Left ventricle myocardium superior (tissue), 1 donor: ENCODE measurements at regions of chr3 and their contacts with region 1.

Region 1: DNA sequence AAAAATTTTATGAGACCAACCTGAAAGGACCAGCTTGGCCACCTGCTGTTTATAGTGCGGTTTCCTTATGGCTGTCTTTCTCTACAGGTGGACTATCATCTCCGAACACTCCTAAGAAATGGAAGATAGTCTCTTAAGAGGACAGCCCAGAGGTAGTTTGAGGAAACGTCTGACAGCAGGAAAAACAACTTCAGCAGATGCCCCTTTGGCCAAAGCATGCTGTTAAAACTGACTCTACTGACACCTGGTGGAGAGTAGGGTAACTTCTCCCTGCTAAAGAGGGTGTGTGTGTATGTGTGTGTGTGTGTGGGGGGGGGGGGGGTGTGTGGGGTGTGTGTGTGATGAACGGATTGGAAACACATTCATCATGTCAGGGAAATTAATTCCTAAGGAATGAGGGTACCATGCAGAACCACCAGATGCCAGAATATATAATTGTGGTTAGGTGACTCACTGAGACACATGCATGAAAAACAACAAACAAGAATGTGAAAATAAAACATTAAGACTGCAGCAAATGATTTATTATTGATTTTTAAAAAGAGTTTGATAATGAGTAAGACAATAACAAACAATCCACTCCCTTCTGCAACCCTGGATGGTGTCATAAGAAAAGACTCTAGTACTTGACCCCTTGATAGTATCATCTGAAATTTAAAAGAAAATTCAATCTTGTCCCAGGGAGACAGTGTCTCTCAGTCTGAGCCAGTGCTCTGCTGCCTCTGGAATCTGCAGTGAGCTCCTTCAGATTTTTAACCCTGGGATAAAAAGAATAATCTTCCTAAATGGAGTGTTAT is 256.5 kb downstream of the THRB start:
- DNase-seq: no peak
- ATAC-seq: peak; percentile 80

Region 2: GRCh38 chr3:24004171-24004938 is 233.8 kb before region 1 on chr3:
- intact Hi-C with region 1: loop called (anchors 5 kb)
- DNase-seq: no peak
- ATAC-seq: no peak